HEK293 (cell line): ENCODE measurements at regions of chr22 and their contacts with region 1.

Region 1: GRCh38 chr22:36856121-36856791 is 4.5 kb upstream of the NCF4 start:
- H3K4me3 ChIP-seq: no peak overlapping the region
- H3K27ac ChIP-seq: no peak overlapping the region
- H3K4me1 ChIP-seq: 0 out of 2 replicates have a peak, but pooled peaks cover 3% of the 10 kb centered on the region
- CTCF ChIP-seq: peak; percentile 100

Region 2: GRCh38 chr22:36552289-36552688 is 304.0 kb before region 1 on chr22:
- CTCF ChIA-PET with region 1: interaction called, 56 read pairs
- POLR2A ChIA-PET with region 1: no interaction called
- H3K4me3 ChIP-seq: no peak overlapping the region
- H3K27ac ChIP-seq: no peak overlapping the region
- H3K4me1 ChIP-seq: no peaks in the 10 kb centered on the region
- CTCF ChIP-seq: no peak

Region 3: GRCh38 chr22:36775964-36776669 is 80.1 kb before region 1 on chr22 and contains the start of gene IFT27:
- CTCF ChIA-PET with region 1: interaction called, 161 read pairs
- POLR2A ChIA-PET with region 1: no interaction called
- H3K4me3 ChIP-seq: peak within 1 kb of the TSS; percentile 90
- H3K27ac ChIP-seq: no peak within 1 kb of the TSS; the same call in 1 of the 2 replicates
- H3K4me1 ChIP-seq: peaks cover 4% of the 10 kb centered on the region
- CTCF ChIP-seq: no peak

Region 4: DNA sequence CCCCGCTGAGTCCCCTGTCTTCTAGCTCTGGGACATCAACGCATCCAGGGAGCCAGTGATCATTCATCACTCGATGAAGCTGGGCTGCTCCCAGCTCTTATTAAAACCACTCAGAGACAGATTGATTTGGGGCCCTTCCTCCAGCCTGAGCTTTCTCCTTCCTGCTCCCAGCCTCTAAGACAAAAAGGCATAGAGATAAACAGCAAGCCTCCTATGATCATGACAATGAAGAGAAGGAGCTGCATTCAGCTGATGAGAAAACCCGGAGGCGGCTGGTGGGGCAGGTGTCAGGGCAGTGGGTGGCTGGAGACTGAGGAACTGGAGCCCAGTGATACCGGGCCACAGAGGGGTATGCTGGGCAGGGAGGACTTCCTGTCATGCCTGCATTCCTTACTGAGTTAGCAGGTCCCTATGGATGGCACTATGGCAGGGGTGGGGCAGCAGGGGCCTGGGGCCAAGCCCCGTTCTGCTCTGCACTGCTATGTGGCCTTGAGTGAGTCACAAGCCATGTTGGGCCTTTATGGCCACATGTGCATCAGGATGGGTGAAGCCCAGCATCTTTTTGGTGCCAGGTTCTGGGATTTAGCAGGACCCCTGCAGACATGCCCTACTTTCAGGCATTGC is 59.6 kb before region 1 on chr22:
- CTCF ChIA-PET with region 1: interaction called, 16 read pairs
- POLR2A ChIA-PET with region 1: no interaction called
- H3K4me3 ChIP-seq: no peak overlapping the region
- H3K27ac ChIP-seq: no peak overlapping the region
- H3K4me1 ChIP-seq: no peaks in the 10 kb centered on the region; the same call in 1 of the 2 replicates
- CTCF ChIP-seq: no peak

Region 5: DNA sequence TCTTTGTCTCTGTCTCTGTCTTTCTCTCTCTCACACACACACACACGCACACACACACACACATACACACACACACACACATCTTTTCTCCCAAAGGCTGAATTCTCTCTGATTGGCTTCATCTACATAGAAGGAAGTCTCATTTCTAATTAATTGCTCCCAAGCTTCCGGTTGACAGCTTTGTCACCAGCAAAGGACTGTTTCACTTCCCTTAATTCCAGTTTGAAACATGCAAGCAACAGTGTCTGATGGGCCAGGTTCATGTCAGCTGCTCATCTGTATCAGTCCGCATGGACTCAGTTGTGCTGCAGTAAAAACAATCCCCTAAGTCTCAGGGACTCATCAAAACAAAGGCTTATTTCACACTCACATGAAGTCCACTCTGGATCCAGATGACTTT is 23.2 kb before region 1 on chr22:
- CTCF ChIA-PET with region 1: interaction called, 92 read pairs
- POLR2A ChIA-PET with region 1: no interaction called
- H3K4me3 ChIP-seq: no peak overlapping the region
- H3K27ac ChIP-seq: no peak overlapping the region
- H3K4me1 ChIP-seq: no peaks in the 10 kb centered on the region
- CTCF ChIP-seq: no peak

Region 6: DNA sequence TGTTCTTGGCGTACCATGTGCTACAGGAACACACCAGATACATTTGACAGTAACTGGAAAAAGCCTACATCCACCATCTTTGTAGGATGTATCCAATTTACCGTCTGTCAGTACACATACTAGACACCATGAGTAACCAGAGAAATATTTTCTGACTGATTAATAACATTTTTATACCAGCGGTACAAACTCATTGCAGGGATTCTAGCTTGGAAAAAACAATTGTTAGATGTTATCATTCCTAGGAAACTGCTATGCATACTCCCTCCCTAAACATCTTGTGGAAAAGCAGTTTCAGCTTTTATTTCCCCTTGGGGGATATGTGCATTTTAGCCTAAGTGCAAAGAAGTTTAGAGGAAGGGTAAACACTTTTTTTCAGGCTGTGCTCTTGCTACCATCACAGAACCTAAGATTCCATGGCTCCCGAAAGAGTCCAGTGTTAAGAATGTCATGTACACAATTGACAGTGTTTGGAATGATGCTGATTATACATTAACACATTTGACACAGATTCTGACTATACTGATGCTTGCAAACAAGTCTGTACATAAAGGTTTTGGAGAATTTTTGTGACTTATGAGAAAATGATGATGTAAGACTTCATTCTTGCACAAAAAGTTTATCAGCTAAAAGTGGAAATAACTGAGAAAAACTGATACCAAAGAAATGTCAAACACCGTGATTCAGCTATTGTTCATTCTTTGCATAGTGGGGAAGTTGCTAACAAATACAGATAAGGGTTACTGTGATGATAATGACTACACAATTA is 28.3 kb after region 1 on chr22:
- CTCF ChIA-PET with region 1: interaction called, 45 read pairs
- POLR2A ChIA-PET with region 1: no interaction called
- H3K4me3 ChIP-seq: no peak overlapping the region
- H3K27ac ChIP-seq: no peak overlapping the region
- H3K4me1 ChIP-seq: no peaks in the 10 kb centered on the region
- CTCF ChIP-seq: no peak

Region 7: GRCh38 chr22:36977947-36978660 is 121.8 kb after region 1 on chr22:
- CTCF ChIA-PET with region 1: interaction called, 104 read pairs
- POLR2A ChIA-PET with region 1: no interaction called
- H3K4me3 ChIP-seq: peak overlapping the region; percentile 20; the same call in 1 of the 2 replicates
- H3K27ac ChIP-seq: no peak overlapping the region
- H3K4me1 ChIP-seq: no peaks in the 10 kb centered on the region
- CTCF ChIP-seq: peak; percentile 91